ENCODE measurements at regions of chr2 and their contacts with region 1.

Region 1: DNA sequence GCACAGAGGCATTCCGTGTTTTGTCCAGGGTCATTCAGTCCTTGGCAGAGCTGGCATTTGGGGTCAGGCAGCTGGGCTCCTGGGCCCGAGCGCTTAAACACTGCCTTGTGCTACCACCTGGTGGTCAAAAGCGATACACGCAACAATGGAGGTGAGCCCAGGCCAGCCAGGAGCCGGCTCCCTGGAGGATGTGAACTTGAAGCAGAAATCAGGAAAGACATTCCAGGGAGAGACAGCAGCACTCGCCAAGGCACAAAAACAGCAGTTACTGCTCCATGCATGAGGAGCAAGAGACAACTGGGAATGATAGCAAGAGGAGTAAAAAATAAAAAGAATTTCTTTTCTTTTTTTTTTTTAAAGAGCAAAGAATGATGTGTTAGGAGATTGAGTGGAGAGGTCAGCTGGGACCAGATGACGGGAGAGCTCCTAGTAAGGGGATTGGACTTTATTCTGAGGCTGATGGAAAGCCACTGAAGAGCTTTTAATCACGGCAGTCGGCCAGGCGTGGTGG is 20.7 kb downstream of the SCYGR8 start:
- DNase-seq: peak; percentile 82 to 91
- ATAC-seq: peak; percentile 94
- H3K4me3 ChIP-seq: no peak overlapping the region
- H3K27ac ChIP-seq: no peak overlapping the region
- H3K4me1 ChIP-seq: no peaks in the 10 kb centered on the region
- H3K27me3 ChIP-seq: no peaks in the 10 kb centered on the region

Region 2: GRCh38 chr2:227655454-227655853 is 111.0 kb before region 1 on chr2:
- intact Hi-C with region 1: loop called (anchors 1 to 5 kb)
- DNase-seq: no peak
- ATAC-seq: peak; percentile 87
- H3K4me3 ChIP-seq: no peak overlapping the region
- H3K27ac ChIP-seq: no peak overlapping the region
- H3K4me1 ChIP-seq: no peaks in the 10 kb centered on the region
- H3K27me3 ChIP-seq: no peaks in the 10 kb centered on the region